Activated CD4-positive, alpha-beta T cell treated with anti-CD3 and anti-CD28 coated beads, Interleukin-2, amount 10 ng/mL, durations not matched to agents 24 days and 14 days (primary cell): ENCODE measurements at regions of chrX and their contacts with region 1.

Region 1: GRCh38 chrX:6021316-6022091 is 207.2 kb downstream of the NLGN4X start:
- DNase-seq: peak; percentile 61
- H3K4me3 Mint-ChIP-seq: no peak overlapping the region
- H3K27ac Mint-ChIP-seq: no peak overlapping the region
- H3K4me1 Mint-ChIP-seq: peaks cover 2% of the 10 kb centered on the region
- H3K27me3 Mint-ChIP-seq: no peaks in the 10 kb centered on the region

Region 2: DNA sequence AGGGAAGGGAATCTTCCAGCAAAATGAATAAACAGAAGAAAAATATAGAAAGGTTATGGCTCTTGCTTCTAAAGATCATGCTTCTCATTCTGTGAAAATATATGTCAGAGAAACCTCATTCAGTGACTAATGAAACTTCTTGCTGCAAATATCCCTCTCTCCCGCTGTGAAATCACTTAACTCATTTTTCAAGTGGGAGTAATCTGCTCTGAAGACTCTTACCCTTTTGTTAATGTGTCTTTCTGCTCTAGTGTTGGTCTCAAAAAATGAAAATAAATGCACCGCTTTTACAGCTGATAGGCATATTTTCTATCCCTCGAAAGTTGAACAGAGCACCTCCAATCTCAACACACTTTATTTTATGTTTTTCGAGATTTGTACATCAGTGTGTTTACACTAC is 45.2 kb before region 1 on chrX:
- intact Hi-C with region 1: no loop called
- DNase-seq: no peak
- H3K4me3 Mint-ChIP-seq: no peak overlapping the region
- H3K27ac Mint-ChIP-seq: no peak overlapping the region
- H3K4me1 Mint-ChIP-seq: no peaks in the 10 kb centered on the region
- H3K27me3 Mint-ChIP-seq: no peaks in the 10 kb centered on the region

Region 3: GRCh38 chrX:7925867-7926472 is 1904.5 kb after region 1 on chrX:
- intact Hi-C with region 1: loop called (anchors 10 kb)
- DNase-seq: peak; percentile 86
- H3K4me3 Mint-ChIP-seq: peak overlapping the region; percentile 34
- H3K27ac Mint-ChIP-seq: peak overlapping the region; percentile 20
- H3K4me1 Mint-ChIP-seq: peaks cover 5% of the 10 kb centered on the region
- H3K27me3 Mint-ChIP-seq: no peaks in the 10 kb centered on the region